ENCODE measurements at regions of chr14 and their contacts with region 1.

Region 1: DNA sequence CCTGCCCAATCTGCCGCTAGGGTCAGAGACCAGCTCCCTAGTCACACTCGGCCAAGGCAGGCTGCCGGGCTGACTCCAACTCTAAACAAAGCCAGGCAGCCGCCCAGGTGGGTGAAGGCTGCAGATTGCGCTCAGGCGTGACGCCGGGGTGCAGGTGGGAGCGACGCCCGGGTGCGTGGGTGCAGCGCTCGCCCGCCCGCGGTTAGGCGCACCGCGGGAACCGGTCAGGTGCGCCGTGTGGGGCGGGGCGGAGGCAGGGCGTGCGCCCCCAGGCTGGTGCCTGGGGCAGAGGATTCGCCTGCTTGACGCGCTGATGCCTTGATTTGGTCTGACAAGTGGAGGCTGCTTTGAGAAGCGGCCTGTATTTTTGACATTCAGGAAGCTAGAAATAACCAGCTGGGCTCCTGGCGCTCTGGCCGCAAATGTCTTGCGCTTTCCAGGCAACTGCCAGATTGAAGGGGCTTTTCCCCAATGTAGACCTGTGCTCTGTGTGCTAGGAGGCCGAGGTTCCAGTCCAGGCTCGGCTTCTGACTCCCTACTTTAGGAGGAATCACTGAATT is 126.7 kb upstream of the HIF1A start:
- DNase-seq: peak; percentile 77
- ATAC-seq: peak; percentile 50
- H3K4me3 Mint-ChIP-seq: peak overlapping the region; percentile 47
- H3K27ac Mint-ChIP-seq: peak overlapping the region; percentile 85
- H3K4me1 Mint-ChIP-seq: peaks cover 80% of the 10 kb centered on the region
- H3K27me3 Mint-ChIP-seq: peaks cover 3% of the 10 kb centered on the region

Region 2: GRCh38 chr14:61512026-61512834 is 56.4 kb before region 1 on chr14:
- CTCF ChIA-PET with region 1: no interaction called
- POLR2A ChIA-PET with region 1: no interaction called
- intact Hi-C with region 1: loop called in 1 of 2 experiments (anchors 2 kb)
- DNase-seq: peak; percentile 44
- ATAC-seq: peak; percentile 59
- H3K4me3 Mint-ChIP-seq: peak overlapping the region; percentile 54
- H3K27ac Mint-ChIP-seq: peak overlapping the region; percentile 97
- H3K4me1 Mint-ChIP-seq: peaks cover 94% of the 10 kb centered on the region
- H3K27me3 Mint-ChIP-seq: no peaks in the 10 kb centered on the region

Region 3: GRCh38 chr14:61537563-61538463 is 30.8 kb before region 1 on chr14:
- CTCF ChIA-PET with region 1: no interaction called
- POLR2A ChIA-PET with region 1: no interaction called
- intact Hi-C with region 1: loop called in 1 of 2 experiments (anchors 2 kb)
- DNase-seq: peak; percentile 69
- ATAC-seq: peak; percentile 78
- H3K4me3 Mint-ChIP-seq: peak overlapping the region; percentile 16
- H3K27ac Mint-ChIP-seq: peak overlapping the region; percentile 89
- H3K4me1 Mint-ChIP-seq: peaks cover 68% of the 10 kb centered on the region
- H3K27me3 Mint-ChIP-seq: no peaks in the 10 kb centered on the region

Measured in activated CD4-positive, alpha-beta T cell treated with anti-CD3 and anti-CD28 coated beads for 36 hours (primary cell).